Stomach (tissue), 19 donors: ENCODE measurements at regions of chr5 and their contacts with region 1.

Region 1: DNA sequence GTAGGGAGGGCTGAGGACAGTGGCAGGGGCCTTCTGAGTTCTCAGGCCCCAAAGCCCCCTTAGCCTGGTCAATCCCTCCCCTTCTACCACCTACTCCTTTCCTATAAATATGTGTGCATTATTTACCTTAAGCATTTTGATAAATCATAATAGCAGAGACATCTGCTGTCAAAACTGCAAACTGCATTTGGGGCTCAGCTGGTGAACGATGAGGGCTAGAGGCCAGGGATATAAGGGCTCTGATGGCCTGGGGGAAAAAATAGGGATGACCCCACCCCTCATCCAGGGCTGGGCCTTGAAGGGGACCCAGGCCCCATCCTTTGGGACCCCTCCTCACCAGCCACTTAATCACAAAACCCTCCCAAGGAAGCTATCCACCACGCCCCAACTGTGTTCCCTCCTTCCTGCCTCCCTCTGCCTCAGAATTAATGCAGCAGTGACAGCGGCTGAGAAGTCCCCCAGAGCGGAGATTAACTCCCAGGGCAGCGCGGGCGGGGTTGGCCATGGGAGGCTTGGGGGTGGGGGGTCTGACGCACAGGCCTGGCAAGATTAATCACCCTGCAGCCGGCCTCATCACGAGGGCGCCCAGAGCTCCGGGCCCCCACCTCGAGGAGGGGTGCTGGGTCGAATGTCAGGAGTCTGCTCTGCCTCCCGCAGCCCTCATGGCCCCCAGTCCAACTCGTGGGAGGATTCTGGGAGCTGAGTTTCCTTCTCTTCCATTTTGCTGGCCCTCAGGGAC is 42.1 kb downstream of the CXXC5 start:
- DNase-seq: peak in 1 of 2 donors; percentile 85
- H3K4me3 ChIP-seq: no peak overlapping the region
- H3K27ac ChIP-seq: peak overlapping the region; percentile 32 to 63 (median 56)
- H3K4me1 ChIP-seq: peaks cover 49 to 76% (median 61%) of the 10 kb centered on the region in 4 donors
- H3K27me3 ChIP-seq: no peaks in the 10 kb centered on the region
- CTCF ChIP-seq: peak in 4 of 7 experiments; percentile 37 to 70 (median 54)
- EP300 ChIP-seq: no peak
- POLR2A ChIP-seq: no peak

Region 2: DNA sequence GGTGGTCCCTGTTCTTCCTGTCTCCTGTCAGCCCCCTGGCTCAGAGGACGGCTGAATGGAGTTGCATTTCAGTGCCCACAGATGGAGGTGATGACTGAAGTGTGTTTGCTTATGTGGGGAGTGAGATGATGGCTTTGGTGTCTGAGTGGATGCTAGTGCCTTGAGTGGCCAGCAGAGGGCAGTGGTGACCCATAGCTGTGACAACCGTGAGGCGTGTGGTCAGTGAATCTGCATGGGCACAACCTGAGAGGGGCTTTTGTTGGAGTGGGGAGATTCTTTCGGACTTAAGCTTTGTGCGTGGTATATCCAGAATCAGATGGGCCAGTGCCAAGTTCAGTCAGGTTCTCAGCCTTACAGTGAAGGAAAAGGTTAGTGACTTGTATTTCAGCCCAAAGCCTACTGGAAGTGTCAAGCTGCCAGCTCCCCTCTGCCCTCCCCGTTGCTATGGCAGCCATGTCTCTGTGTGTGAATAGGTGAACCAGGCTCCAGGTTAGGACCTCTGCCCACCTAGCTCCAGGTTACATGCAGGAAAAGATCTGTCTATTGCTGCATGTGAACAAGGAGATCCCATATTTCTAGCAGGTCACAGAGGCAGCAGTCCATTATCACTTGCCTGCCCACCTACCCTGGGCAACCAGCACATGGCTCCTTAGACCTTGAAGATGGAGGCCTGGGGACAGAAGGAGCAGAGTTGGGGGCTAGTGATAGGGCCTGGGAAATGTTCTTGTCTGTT is 56.8 kb before region 1 on chr5:
- intact Hi-C with region 1: loop called (anchors 5 kb)
- DNase-seq: peak; percentile 71 to 93
- H3K4me3 ChIP-seq: no peak overlapping the region
- H3K27ac ChIP-seq: no peak overlapping the region
- H3K4me1 ChIP-seq: peaks cover 34 to 45% (median 39%) of the 10 kb centered on the region in 4 donors
- H3K27me3 ChIP-seq: peaks cover 0 to 3% (median 0%) of the 10 kb centered on the region in 3 donors
- CTCF ChIP-seq: peak in 6 of 7 experiments; percentile 46 to 99 (median 96)
- EP300 ChIP-seq: no peak
- POLR2A ChIP-seq: no peak